Endothelial cell of umbilical vein (primary cell): ENCODE measurements at regions of chr10 and their contacts with region 1.

Region 1: DNA sequence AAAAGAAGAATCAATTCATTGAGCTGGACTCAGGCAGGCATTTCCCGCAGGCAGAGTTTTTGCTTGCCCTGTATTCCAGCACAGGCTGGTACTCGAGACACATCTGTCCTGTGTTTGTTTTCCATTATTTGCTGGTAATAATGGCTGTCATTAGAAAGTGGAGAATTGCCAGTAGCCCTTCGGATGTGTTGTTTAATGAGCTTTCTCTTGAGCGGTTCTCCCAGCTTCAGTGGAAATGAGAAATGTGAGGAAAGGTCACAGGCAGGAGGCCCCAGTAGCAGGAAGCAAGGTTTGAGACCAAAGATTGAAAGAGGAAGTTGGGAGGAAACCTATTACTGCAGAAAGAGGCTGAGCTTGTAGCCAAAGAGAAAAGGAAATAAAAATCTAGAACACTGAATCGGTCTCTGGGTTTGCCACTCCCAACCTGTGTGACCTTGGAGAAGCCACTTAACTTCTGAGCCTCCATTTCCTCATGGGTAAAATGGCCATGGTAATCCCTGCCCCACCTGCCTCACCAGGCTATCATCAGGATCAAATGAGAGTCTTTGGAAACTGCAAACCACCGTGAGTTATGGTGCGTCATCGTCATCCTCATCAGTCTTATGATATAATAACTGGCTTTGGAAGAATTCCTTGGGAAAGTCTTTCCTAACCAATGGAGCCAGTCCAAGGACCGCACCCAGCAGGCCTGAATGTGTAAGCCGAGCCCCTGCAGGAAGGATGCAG is 67.7 kb downstream of the TACR2 start:
- DNase-seq: peak; percentile 74
- H3K4me3 ChIP-seq: no peak overlapping the region
- H3K27ac ChIP-seq: peak overlapping the region; percentile 77
- H3K4me1 ChIP-seq: peaks cover 52% of the 10 kb centered on the region
- H3K27me3 ChIP-seq: no peaks in the 10 kb centered on the region
- CTCF ChIP-seq: no peak
- POLR2A ChIP-seq: no peak

Region 2: DNA sequence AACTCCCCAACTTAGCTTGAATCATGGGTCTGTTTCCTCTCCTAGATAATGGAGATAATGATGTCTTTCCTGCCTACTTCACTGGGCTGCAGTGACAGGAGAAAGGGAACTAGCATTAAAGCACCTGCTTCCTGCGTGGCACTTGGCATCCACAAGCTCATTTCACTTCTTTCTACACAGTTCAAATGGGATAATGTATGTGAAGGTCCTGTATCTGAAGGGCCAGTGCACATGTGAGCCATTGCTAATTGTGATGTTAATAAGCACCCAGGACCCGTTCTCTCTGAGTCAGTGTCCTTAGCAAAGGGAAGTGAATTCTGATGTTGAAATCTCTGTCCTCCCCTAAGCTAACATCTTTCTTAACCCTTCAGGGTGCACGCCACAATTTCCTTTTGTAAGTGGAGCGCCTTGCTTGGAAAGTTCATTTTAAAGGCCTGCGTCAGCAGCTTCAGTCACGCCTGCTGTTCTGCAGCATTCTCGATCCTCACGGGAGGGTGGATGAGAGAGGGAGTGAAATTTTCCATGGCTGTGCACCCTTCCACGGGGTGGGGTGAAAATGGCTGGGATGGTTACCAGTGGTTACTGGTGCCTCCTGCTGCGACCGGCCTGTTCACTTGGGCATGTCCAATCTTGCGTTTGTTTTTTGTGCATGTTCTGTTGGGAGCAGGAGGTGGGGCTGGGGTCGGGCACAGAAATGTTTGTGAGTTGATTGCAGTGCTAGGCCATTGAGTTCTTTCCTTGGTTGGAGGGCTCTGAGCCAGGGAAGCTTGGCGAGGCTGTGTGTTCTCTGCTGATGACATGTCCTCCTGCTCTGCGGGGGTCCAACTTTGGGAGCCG is 11.5 kb before region 1 on chr10:
- CTCF ChIA-PET with region 1: interaction called, 7 read pairs
- POLR2A ChIA-PET with region 1: interaction called, 4 read pairs
- dilution Hi-C with region 1: no loop called
- intact Hi-C with region 1: loop called (anchors 1 kb)
- DNase-seq: peak; percentile 34
- H3K4me3 ChIP-seq: no peak overlapping the region
- H3K27ac ChIP-seq: no peak overlapping the region
- H3K4me1 ChIP-seq: peaks cover 31% of the 10 kb centered on the region
- H3K27me3 ChIP-seq: no peaks in the 10 kb centered on the region
- CTCF ChIP-seq: no peak
- POLR2A ChIP-seq: no peak

Region 3: GRCh38 chr10:69360485-69361324 is 11.7 kb after region 1 on chr10:
- CTCF ChIA-PET with region 1: interaction called, 6 read pairs
- POLR2A ChIA-PET with region 1: no interaction called
- dilution Hi-C with region 1: no loop called
- intact Hi-C with region 1: loop called (anchors 2 kb)
- DNase-seq: peak; percentile 40
- H3K4me3 ChIP-seq: no peak overlapping the region
- H3K27ac ChIP-seq: peak overlapping the region; percentile 35
- H3K4me1 ChIP-seq: peaks cover 28% of the 10 kb centered on the region
- H3K27me3 ChIP-seq: no peaks in the 10 kb centered on the region
- CTCF ChIP-seq: no peak
- POLR2A ChIP-seq: no peak

Region 4: GRCh38 chr10:69649786-69650555 is 301.0 kb after region 1 on chr10:
- CTCF ChIA-PET with region 1: no interaction called
- POLR2A ChIA-PET with region 1: no interaction called
- dilution Hi-C with region 1: no loop called
- intact Hi-C with region 1: no loop called
- DNase-seq: no peak
- H3K4me3 ChIP-seq: no peak overlapping the region
- H3K27ac ChIP-seq: no peak overlapping the region
- H3K4me1 ChIP-seq: peaks cover 2% of the 10 kb centered on the region
- H3K27me3 ChIP-seq: peaks cover 0 to 2% of the 10 kb centered on the region in 2 experiments
- CTCF ChIP-seq: no peak
- POLR2A ChIP-seq: no peak